Mammary epithelial cell (primary cell): ENCODE measurements at regions of chr21 and their contacts with region 1.

Region 1: DNA sequence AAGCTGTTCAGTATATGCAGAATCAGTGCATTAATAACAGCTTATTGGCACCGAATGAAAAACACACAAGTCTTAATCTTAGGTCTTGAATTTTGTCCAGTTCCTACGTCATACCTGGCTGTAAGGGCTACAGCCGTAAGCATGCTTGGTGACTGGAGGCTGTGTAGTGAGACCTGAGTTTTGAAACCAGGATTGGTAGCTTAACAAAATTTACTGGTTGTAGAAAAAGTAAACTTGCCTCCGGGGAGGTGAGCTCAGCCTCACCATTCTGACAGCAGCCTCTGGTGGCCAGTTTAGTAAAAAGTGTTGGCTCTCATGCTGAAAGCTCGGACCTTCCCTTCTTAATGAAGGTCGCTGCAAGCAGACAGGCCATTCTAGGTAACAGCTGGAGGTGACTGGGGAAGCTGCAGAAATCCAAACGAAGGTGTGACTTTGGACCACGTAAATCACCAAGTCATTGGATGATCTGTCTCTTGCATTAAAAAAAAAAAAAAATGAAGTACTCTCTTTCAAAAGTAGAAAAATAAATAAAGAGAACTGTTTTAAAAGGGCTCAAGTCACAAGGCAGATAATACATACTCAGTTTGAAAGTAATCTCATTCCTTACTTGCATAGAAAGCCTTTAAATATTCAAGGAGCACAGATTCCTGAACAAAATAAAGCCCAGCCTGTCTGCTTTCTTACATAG is 48.9 kb downstream of the HLCS start:
- DNase-seq: no peak
- H3K4me3 ChIP-seq: no peak overlapping the region
- H3K27ac ChIP-seq: no peak overlapping the region
- H3K4me1 ChIP-seq: no peaks in the 10 kb centered on the region
- H3K27me3 ChIP-seq: no peaks in the 10 kb centered on the region
- CTCF ChIP-seq: peak; percentile 41 to 71

Region 2: DNA sequence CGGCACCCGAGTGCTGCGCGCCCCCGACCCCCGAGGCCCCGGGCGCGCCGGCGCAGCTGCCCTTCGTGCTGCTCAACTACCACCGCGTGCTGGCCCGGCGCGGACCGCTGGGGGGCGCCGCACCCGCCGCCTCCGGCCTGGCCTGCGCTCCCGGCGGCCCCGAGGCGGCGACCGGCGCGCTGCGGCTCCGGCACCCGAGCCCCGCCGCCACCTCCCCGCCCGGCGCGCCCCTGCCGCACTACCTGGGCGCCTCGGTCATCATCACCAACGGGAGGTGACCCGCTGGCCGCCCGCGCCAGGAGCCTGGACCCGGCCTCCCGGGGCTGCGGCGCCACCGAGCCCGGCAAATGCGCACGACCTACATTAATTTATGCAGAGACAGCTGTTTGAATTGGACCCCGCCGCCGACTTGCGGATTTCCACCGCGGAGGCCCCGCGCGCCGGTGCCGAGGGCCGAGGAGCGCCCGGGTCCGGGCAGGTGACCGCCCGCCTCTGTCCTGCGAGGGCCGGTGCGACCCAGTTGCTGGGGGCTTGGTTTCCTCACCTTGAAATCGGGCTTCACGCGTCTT is 169.7 kb before region 1 on chr21:
- CTCF ChIA-PET with region 1: no interaction called
- dilution Hi-C with region 1: no loop called
- in situ Hi-C with region 1: no loop called
- intact Hi-C with region 1: loop called (anchors 5 kb)
- DNase-seq: no peak
- H3K4me3 ChIP-seq: peak overlapping the region in 2 of 3 experiments; percentile 23 to 36
- H3K27ac ChIP-seq: no peak overlapping the region
- H3K4me1 ChIP-seq: peaks cover 3% of the 10 kb centered on the region
- H3K27me3 ChIP-seq: no peaks in the 10 kb centered on the region
- CTCF ChIP-seq: peak in 1 of 2 donors; percentile 4

Region 3: GRCh38 chr21:36773117-36773516 is 144.5 kb before region 1 on chr21:
- CTCF ChIA-PET with region 1: no interaction called
- dilution Hi-C with region 1: no loop called
- in situ Hi-C with region 1: loop called in 1 of 2 experiments (anchors 25 kb)
- intact Hi-C with region 1: loop called (anchors 5 kb)
- DNase-seq: peak; percentile 84
- H3K4me3 ChIP-seq: no peak overlapping the region
- H3K27ac ChIP-seq: no peak overlapping the region
- H3K4me1 ChIP-seq: peaks cover 5% of the 10 kb centered on the region
- H3K27me3 ChIP-seq: no peaks in the 10 kb centered on the region
- CTCF ChIP-seq: no peak

Region 4: DNA sequence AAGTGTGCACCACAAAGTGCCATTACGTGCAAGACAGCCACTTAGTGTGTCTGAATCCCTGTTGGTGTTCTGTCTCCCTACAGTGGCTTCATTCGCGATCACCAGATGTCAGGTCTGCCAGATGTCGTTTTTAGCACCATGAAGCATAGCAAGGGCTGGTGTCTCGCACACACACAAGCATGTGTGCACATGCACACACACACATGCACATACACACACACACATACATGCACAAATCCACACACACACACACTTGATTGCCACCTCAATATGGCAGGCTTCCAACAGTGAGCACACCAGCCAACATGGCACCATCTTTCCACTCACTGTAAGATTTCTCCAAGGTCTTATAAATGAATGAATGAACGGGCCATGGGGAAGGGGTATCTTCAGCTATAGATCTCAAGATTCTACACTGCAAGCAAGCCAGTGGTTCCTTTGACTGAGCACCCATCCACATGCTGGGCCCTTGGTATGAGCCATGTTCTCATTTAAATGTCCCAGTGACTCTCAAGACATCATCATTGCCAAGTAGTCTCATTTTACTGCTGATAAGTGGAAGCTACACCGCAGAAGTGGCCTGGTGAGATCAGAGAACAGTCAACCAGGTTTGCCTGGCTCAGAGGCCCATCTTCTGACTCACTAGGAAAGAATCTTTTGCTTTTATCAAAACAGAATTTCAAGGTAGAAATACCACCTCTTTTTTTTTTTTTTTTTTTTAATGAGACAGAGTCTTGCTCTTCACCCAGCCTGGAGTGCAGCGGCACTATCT is 133.8 kb before region 1 on chr21:
- CTCF ChIA-PET with region 1: no interaction called
- dilution Hi-C with region 1: no loop called
- in situ Hi-C with region 1: loop called in 1 of 2 experiments (anchors 25 kb)
- intact Hi-C with region 1: no loop called
- DNase-seq: peak; percentile 77
- H3K4me3 ChIP-seq: no peak overlapping the region
- H3K27ac ChIP-seq: no peak overlapping the region
- H3K4me1 ChIP-seq: peaks cover 16% of the 10 kb centered on the region
- H3K27me3 ChIP-seq: no peaks in the 10 kb centered on the region
- CTCF ChIP-seq: no peak

Region 5: GRCh38 chr21:36959020-36959835 is 41.6 kb after region 1 on chr21:
- CTCF ChIA-PET with region 1: no interaction called
- dilution Hi-C with region 1: no loop called
- in situ Hi-C with region 1: no loop called
- intact Hi-C with region 1: no loop called
- DNase-seq: no peak
- H3K4me3 ChIP-seq: no peak overlapping the region
- H3K27ac ChIP-seq: no peak overlapping the region
- H3K4me1 ChIP-seq: no peaks in the 10 kb centered on the region
- H3K27me3 ChIP-seq: no peaks in the 10 kb centered on the region
- CTCF ChIP-seq: no peak

Region 6: GRCh38 chr21:37484535-37485474 is 567.2 kb after region 1 on chr21:
- CTCF ChIA-PET with region 1: no interaction called
- dilution Hi-C with region 1: no loop called
- in situ Hi-C with region 1: no loop called
- intact Hi-C with region 1: no loop called
- DNase-seq: peak; percentile 47
- H3K4me3 ChIP-seq: no peak overlapping the region
- H3K27ac ChIP-seq: no peak overlapping the region
- H3K4me1 ChIP-seq: no peaks in the 10 kb centered on the region
- H3K27me3 ChIP-seq: no peaks in the 10 kb centered on the region
- CTCF ChIP-seq: no peak